ENCODE measurements at regions of chr1 and their contacts with region 1.

Region 1: DNA sequence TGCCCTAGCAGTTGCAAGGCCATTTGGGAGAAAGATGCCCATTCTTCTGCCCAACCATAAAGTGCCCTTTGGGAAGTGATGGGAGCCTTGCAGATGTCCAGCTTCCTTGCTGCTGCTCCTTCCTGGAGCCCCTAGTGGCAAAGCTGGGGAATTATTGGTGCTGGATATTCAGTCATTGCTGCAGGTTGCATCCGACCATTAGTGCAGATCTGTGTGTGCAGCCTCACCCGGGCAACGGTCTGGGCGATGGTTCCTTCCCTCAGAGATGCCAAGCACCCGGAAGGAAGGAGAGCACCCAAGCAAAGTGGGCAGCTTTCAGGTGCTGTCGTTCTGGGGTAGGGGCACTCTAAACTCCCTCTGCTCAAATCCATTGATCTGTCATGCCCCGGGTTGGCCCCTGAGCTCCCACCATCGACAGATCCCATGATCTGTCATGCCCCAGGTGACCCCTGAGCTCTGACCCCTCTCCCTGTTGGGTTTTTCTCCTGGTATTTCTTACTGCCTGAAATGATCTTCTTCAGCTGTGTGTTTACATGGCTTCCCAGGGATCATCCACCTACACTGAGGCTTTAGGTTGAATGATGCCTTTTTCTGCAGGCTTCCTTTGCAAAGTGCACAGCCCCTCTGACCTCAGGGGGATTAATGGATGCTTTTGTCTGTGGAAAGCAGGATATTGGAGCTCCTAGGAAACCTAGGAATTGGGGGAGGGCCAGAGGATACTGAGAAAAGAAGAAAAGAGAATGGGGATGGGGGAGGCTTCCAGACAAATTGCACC is 467.5 kb downstream of the PTPRU start:
- DNase-seq: no peak
- H3K4me3 ChIP-seq: no peak overlapping the region
- H3K27me3 ChIP-seq: no peaks in the 10 kb centered on the region
- CTCF ChIP-seq: peak; percentile 91

Region 2: GRCh38 chr1:29603622-29604021 is 100.2 kb before region 1 on chr1:
- CTCF ChIA-PET with region 1: no interaction called
- POLR2A ChIA-PET with region 1: no interaction called
- DNase-seq: no peak
- H3K4me3 ChIP-seq: no peak overlapping the region
- H3K27me3 ChIP-seq: peaks cover 3% of the 10 kb centered on the region; the same call in 1 of the 2 replicates
- CTCF ChIP-seq: no peak

Region 3: GRCh38 chr1:29675481-29676263 is 28.1 kb before region 1 on chr1:
- CTCF ChIA-PET with region 1: no interaction called
- POLR2A ChIA-PET with region 1: no interaction called
- DNase-seq: no peak
- H3K4me3 ChIP-seq: no peak overlapping the region
- H3K27me3 ChIP-seq: no peaks in the 10 kb centered on the region
- CTCF ChIP-seq: no peak

Region 4: GRCh38 chr1:29688471-29689365 is 15.1 kb before region 1 on chr1:
- CTCF ChIA-PET with region 1: interaction called, 45 read pairs
- POLR2A ChIA-PET with region 1: no interaction called
- DNase-seq: peak; percentile 63
- H3K4me3 ChIP-seq: no peak overlapping the region
- H3K27me3 ChIP-seq: no peaks in the 10 kb centered on the region
- CTCF ChIP-seq: no peak